GM23248 (cell line): ENCODE measurements at regions of chr6 and their contacts with region 1.

Region 1: DNA sequence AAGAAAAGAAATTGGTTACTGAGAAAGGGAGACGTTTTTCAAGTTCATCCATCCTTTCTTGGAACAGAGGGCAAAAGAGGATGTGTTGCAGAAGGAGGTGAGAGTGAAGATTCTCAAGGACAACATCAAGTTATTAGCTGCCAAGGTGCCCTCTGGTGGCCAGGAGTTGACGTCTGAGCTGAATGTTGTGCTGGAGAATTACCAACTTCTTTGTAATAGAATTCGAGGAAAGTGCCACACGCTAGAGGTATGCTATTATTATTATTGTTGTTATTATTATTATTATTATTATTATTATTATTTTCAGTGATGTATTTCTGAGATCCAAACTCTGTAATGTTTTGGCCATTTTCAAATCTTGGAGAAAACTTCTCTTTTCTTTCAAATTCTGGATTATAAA is 197.0 kb downstream of the UTRN start:
- DNase-seq: peak; percentile 92
- H3K4me3 ChIP-seq: no peak overlapping the region
- H3K27ac ChIP-seq: 0 out of 2 replicates have a peak overlapping the region, but pooled peaks have one; percentile 11
- H3K4me1 ChIP-seq: peaks cover 11% of the 10 kb centered on the region; the same call in 1 of the 2 replicates
- H3K27me3 ChIP-seq: no peaks in the 10 kb centered on the region

Region 2: GRCh38 chr6:144104898-144105487 is 377.1 kb before region 1 on chr6:
- in situ Hi-C with region 1: loop called (anchors 10 kb)
- DNase-seq: peak; percentile 80
- H3K4me3 ChIP-seq: no peak overlapping the region
- H3K27ac ChIP-seq: no peak overlapping the region
- H3K4me1 ChIP-seq: no peaks in the 10 kb centered on the region
- H3K27me3 ChIP-seq: no peaks in the 10 kb centered on the region